Mucosa of descending colon (tissue), 3 donors: ENCODE measurements at regions of chr4 and their contacts with region 1.

Region 1: GRCh38 chr4:16026160-16026761 is 57.6 kb downstream of the PROM1 start:
- DNase-seq: peak in 1 of 3 donors; percentile 75
- ATAC-seq: peak; percentile 60
- H3K4me3 ChIP-seq: no peak overlapping the region
- H3K4me1 ChIP-seq: peaks cover 3% of the 10 kb centered on the region
- CTCF ChIP-seq: peak; percentile 49

Region 2: GRCh38 chr4:16205298-16206164 is 179.3 kb after region 1 on chr4:
- intact Hi-C with region 1: loop called in 1 of 2 experiments (anchors 10 kb)
- DNase-seq: no peak
- ATAC-seq: peak; percentile 85
- H3K4me3 ChIP-seq: no peak overlapping the region
- H3K4me1 ChIP-seq: no peaks in the 10 kb centered on the region
- CTCF ChIP-seq: peak; percentile 31

Region 3: DNA sequence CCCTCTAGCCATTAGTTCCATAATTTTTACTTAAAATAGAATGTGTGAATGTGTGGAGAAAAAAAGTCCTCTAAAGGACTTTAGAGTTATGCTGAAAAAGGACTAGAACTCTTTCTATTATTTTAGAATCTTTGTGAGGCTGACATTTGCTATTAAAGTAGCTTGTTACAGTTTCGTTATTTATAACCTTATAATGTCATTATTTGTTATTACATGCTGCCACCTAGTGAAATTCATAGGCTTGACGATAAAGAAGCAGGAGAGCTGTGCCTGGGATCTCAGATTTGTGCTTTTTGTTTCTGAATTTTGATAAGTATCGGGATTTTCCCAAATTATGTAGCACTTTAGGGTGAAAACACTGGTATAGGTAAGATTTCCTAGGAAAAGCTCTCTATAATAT is 238.5 kb after region 1 on chr4:
- intact Hi-C with region 1: loop called (anchors 5 to 10 kb)
- DNase-seq: peak in 1 of 3 donors; percentile 6
- ATAC-seq: no peak
- H3K4me3 ChIP-seq: no peak overlapping the region
- H3K4me1 ChIP-seq: no peaks in the 10 kb centered on the region
- CTCF ChIP-seq: no peak